Heart right ventricle (tissue), 16 donors: ENCODE measurements at regions of chr6 and their contacts with region 1.

Region 1: DNA sequence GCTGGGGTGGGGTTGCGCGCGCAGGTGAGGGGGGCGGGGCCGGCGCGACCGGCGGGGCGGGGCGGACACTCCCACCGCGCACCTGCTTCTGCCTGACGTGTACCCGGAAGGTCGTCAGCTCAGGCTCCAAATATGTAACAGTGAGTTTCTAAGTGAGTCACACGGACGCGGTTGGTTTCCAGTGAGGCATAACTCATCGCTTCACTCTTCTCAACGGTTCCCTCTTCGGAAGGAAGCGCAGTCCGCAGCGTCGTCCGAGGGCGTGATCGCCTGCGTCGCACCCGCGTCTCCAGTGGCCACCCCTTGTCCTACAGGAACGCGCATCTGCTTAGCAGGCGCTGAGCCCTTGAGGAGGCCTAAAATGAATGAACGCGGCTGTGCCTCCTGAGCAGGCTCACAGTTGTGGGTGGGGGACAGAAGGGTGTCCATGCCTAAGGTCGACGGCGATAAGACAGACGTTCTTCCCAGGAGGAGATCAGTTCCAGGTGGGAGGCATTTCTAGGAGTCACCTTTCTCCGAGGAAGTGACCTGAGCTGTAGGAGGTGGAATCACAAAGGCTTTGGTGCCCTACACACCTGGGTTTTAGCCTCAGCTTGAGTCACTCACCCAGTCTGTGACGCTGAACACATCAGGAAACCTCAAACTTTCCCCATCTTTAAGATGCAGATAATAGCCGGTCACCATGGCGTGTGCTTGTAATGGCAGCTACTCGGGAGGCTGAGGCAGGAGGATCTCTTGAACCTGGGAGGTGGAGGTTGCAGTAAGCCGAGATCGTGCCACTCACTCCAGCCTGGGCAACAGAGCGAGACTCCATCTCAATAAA is 50.9 kb upstream of the EZR start:
- DNase-seq: no peak
- ATAC-seq: peak in 3 of 8 donors; percentile 76 to 84 (median 79)
- H3K4me3 ChIP-seq: peak overlapping the region in 9 of 10 donors; percentile 32 to 61 (median 53)
- H3K27ac ChIP-seq: peak overlapping the region in 9 of 10 donors; percentile 48 to 92 (median 60)
- H3K4me1 ChIP-seq: peaks cover 0 to 14% (median 3%) of the 10 kb centered on the region in 9 donors
- H3K27me3 ChIP-seq: no peaks in the 10 kb centered on the region
- CTCF ChIP-seq: peak in 1 of 9 donors; percentile 5

Region 2: GRCh38 chr6:158819213-158819909 is 50.7 kb before region 1 on chr6 and contains the start of gene EZR:
- intact Hi-C with region 1: loop called in 2 of 10 experiments (anchors 5 kb)
- DNase-seq: peak; percentile 74 to 87
- ATAC-seq: peak; percentile 71 to 81 (median 78)
- H3K4me3 ChIP-seq: peak within 1 kb of the TSS; percentile 57 to 95 (median 87)
- H3K27ac ChIP-seq: peak within 1 kb of the TSS; percentile 82 to 96 (median 94)
- H3K4me1 ChIP-seq: peaks cover 3 to 43% (median 31%) of the 10 kb centered on the region in 9 donors
- H3K27me3 ChIP-seq: no peaks in the 10 kb centered on the region
- CTCF ChIP-seq: peak in 2 of 9 donors; percentile 7 to 17
- total RNA-seq, gene EZR: 148 to 227 (median 186) TPM

Region 3: GRCh38 chr6:158911349-158912119 is 41.5 kb after region 1 on chr6:
- intact Hi-C with region 1: no loop called
- DNase-seq: no peak
- ATAC-seq: no peak
- H3K4me3 ChIP-seq: no peak overlapping the region
- H3K27ac ChIP-seq: no peak overlapping the region
- H3K4me1 ChIP-seq: peaks cover 0 to 14% (median 0%) of the 10 kb centered on the region in 9 donors
- H3K27me3 ChIP-seq: peaks cover 0 to 6% (median 4%) of the 10 kb centered on the region in 7 donors
- CTCF ChIP-seq: no peak